ENCODE measurements at regions of chr17 and their contacts with region 1.

Region 1: DNA sequence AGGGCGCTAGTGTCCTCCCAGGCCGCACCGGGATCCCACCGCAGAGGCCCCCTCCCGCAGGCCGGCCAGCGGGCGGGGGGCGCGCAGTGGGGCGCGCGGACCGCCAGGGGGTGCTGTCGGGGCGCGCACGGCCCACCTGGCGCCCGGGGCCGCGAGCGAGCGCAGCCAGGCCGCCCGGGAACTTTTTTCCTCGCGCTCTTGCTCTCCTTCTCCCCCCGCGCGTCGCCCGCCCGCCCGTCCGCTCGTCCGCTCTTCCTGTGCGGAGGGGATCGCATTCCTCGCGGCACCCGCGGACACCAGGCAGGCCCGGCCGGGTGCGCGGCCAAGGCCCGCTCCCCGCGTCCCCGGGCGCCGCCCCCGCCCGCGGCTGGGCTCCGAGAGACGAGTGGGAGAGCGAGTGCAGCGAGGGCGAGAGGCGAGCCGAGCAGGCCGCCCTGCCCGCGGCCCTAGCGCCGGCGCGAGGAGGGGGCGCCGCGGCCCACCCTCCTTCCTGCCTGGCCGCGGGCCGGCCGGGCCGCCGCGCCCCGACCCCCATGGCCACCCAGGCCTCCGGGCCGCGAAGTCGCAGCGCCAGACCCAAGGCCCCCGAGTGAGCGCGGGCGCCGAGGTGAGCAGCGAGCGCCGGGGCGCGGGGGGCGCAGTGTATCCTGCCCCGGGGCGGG is at the start of gene RAI1:
- DNase-seq: peak; percentile 66
- H3K4me3 Mint-ChIP-seq: peak within 1 kb of the TSS; percentile 85
- H3K27ac Mint-ChIP-seq: peak within 1 kb of the TSS; percentile 85
- H3K4me1 Mint-ChIP-seq: peaks cover 37% of the 10 kb centered on the region
- H3K27me3 Mint-ChIP-seq: peaks cover 9% of the 10 kb centered on the region
- total RNA-seq, gene RAI1: 18.1 to 18.5 TPM

Region 2: GRCh38 chr17:17648762-17649161 is 32.6 kb before region 1 on chr17:
- CTCF ChIA-PET with region 1: no interaction called
- POLR2A ChIA-PET with region 1: no interaction called
- DNase-seq: no peak
- H3K4me3 Mint-ChIP-seq: no peak overlapping the region
- H3K27ac Mint-ChIP-seq: no peak overlapping the region
- H3K4me1 Mint-ChIP-seq: no peaks in the 10 kb centered on the region
- H3K27me3 Mint-ChIP-seq: peaks cover 3% of the 10 kb centered on the region

Region 3: DNA sequence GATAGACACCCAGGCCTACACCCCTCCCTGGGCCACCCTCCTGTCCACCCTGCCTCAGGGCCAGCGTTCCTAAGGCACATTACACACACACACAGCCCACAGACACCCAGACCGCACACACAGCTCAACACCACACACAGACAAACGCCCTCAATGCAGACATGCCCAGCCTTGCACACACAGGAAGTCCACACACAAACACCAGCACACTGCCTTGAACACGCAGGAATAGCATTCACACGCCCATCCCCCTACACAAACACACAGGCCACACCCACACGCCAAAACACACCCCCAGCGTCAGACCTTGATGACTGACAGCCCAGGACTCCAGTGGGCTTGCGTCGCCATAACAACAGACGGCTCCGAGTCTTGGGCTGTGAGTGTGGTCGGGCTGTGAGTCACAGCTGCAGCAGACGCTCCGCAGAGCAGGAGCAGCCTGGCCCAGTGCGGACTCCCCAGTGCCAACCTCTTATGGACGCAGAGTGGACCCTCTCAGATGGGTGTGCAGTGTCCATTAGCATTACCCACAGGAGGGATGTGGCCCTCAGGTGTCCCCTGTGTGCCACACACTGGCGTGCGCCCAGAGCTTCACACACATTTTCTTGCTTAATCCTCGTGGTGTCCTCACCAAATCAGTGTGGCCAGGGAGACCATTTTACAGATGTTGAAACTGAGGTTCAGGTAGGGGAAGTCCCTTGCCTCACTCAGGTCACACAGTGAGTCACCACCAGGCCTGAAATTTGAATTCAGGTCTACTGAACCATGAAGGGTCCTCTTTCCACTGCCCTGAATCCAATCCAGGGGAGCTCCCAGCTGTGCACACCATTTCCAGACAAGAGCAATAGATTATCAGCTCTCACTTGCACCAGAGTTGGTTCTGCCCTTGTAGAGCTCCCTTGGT is 17.9 kb before region 1 on chr17:
- CTCF ChIA-PET with region 1: interaction called, 20 read pairs
- POLR2A ChIA-PET with region 1: no interaction called
- DNase-seq: peak; percentile 75
- H3K4me3 Mint-ChIP-seq: no peak overlapping the region
- H3K27ac Mint-ChIP-seq: peak overlapping the region; percentile 39
- H3K4me1 Mint-ChIP-seq: peaks cover 14% of the 10 kb centered on the region
- H3K27me3 Mint-ChIP-seq: no peaks in the 10 kb centered on the region

Region 4: DNA sequence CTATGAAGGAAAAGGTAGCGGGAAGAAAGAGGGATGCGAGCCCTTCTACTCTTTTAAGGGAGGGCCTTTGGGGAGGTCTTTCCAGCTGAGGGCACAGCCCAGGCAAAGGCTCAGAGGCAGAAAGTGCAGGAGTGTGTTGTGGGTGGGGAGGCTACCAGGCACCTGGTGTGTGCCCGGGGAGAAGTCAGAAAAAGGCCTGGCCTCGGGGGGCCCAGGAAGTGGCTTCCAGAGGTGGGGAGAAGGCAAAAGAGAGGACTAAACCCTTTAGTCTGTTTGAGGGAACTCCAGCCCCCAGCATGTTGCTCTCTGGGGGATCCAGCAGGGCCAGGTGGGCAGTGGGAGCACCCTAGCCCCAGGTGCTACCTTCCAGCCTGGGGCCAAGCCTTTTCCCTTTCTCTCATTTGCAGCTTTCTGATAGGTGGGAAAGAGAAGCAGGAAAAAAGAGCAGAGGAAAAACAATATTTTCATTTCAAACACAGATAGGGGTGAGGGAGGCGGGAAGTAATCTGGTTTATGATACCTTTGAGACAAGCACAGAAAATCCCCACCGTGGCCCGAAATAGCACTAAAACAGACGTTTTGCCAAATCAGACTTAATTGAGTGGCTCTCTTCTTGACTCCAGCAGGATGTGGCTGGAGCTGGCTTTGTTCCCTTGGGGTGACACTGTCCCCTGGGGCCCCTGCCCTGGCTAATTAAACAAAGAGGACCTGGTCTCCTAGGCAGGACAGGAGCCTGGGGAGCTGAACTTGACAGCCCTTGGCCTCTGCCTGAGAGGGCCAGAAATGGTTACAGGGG is 10.3 kb after region 1 on chr17:
- CTCF ChIA-PET with region 1: interaction called, 11 read pairs
- POLR2A ChIA-PET with region 1: no interaction called
- DNase-seq: no peak
- H3K4me3 Mint-ChIP-seq: no peak overlapping the region
- H3K27ac Mint-ChIP-seq: peak overlapping the region; percentile 10
- H3K4me1 Mint-ChIP-seq: peaks cover 60% of the 10 kb centered on the region
- H3K27me3 Mint-ChIP-seq: no peaks in the 10 kb centered on the region

Measured in activated CD4-positive, alpha-beta T cell treated with anti-CD3 and anti-CD28 coated beads, Interleukin-2, amount 10 ng/mL, durations not matched to agents 7 days and 5 days (primary cell).